ENCODE measurements at regions of chr4 and their contacts with region 1.

Region 1: DNA sequence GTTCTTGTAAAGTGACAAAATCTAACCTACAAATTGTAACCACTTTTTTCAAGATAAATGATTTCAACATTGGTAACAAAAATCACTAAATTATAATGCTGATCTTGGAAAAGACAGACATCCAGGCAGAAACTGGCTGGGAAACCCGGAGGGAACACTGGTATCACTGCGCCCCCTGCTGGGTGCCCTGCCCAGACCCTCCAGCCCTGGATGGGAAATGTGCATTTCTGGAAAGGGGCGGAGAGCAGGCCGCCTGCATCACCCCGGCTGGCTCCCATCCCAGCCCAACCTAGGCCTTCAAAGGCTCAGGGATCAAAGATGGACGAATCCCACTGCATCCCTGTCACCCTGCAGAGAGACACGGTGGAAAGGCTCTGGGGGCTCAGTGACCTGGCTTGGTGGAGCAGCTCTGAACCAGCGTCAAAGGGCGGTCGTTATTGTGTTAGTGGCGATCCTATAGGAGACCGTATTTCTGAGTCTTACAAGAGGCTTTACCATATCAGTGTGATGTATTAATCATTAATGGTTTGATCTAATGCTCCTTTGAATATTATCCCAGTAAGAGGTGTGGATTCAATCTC is 37.3 kb downstream of the ACOX3 start:
- DNase-seq: peak; percentile 91 to 96 (median 96)
- ATAC-seq: peak; percentile 79 to 86
- H3K4me3 ChIP-seq: no peak overlapping the region
- H3K27ac ChIP-seq: no peak overlapping the region
- H3K4me1 ChIP-seq: peaks cover 4% of the 10 kb centered on the region
- H3K27me3 ChIP-seq: no peaks in the 10 kb centered on the region

Region 2: DNA sequence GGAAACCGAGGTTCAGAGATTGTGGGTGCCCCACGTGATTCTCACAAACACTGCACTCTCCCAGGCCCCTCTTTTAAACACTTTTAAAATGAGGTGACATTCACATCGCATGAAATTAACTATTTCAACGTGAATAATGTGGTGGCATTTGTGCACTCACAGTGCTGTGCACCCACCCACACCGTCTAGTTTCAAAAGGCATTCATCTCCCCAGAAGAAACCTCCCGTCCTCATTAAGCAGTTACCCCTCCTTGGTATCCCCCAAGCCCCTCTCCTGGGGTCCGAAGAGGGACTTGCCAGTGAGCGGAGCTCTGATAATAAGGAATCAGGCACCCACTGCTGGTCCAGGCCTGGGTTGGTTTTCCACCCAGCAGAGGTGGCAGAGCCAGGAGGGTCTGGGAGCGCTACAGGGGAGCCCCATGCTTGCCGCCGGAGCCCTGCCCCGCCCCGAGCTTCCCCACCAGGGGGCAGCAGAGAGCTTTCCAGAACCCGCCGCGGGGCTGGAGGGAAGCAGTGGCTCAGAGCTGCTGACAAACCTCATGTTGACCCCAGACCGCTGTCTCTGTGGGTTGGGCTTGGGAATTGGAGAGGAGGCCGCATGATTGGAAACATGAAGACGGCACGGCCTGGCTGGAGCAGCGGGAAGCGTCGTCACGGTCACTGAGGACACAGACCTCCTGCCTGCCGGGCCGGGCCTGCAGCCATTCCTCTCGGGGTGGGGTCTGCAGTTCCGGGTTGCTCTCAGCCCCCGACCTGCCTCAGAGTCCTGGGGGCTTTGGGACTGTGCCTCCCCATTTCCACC is 161.2 kb before region 1 on chr4:
- intact Hi-C with region 1: loop called (anchors 1 to 5 kb)
- DNase-seq: peak; percentile 92 to 97 (median 96)
- ATAC-seq: peak; percentile 79 to 85
- H3K4me3 ChIP-seq: no peak overlapping the region
- H3K27ac ChIP-seq: peak overlapping the region; percentile 76
- H3K4me1 ChIP-seq: peaks cover 6% of the 10 kb centered on the region
- H3K27me3 ChIP-seq: no peaks in the 10 kb centered on the region

Region 3: GRCh38 chr4:8255698-8256441 is 147.4 kb before region 1 on chr4:
- intact Hi-C with region 1: loop called in 1 of 4 experiments (anchors 5 kb)
- DNase-seq: peak; percentile 84 to 90 (median 85)
- ATAC-seq: peak; percentile 71 to 83
- H3K4me3 ChIP-seq: no peak overlapping the region
- H3K27ac ChIP-seq: no peak overlapping the region
- H3K4me1 ChIP-seq: no peaks in the 10 kb centered on the region
- H3K27me3 ChIP-seq: no peaks in the 10 kb centered on the region

Region 4: DNA sequence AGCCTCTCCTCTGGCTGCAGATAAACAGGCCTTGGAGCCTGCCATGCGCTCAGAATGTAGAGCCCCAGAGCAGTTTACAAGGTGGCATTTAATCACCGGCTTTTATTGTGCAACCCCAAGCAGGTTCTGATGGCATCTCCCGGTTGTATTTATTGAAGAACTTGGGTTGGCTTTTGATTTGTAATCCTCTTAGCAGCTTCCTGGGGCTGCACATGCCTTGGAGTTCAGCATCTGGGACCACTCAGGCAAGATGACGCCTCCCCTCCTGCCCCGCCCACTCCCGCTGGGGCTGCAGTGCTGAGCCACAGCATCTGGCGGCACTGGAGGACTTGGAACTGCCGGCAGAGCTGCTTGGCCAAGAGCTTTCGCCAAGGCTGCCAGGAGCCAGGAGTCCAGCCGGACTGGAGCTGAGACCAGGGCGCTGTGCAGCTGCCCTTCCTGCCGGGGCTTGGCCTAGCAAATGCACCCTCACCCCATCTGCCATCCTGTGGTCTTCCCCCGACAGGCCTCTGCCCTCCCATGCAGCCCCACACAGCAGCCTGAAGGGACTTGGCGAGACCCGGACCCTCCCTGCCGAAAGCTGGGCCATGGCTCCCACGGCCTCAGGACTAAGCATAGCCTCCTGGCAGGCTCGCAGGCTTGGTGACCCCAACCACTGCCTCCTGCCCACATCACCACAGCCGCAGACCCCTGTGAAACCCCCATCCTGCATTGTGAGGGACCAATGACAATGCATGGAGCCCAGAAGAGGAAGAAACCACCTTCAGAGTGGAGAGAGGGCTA is 128.3 kb before region 1 on chr4:
- intact Hi-C with region 1: loop called in 2 of 4 experiments (anchors 5 to 10 kb)
- DNase-seq: peak; percentile 93 to 97 (median 95)
- ATAC-seq: peak; percentile 63 to 76
- H3K4me3 ChIP-seq: no peak overlapping the region
- H3K27ac ChIP-seq: no peak overlapping the region
- H3K4me1 ChIP-seq: peaks cover 16% of the 10 kb centered on the region
- H3K27me3 ChIP-seq: no peaks in the 10 kb centered on the region

Region 5: GRCh38 chr4:8607603-8608481 is 204.6 kb after region 1 on chr4:
- intact Hi-C with region 1: no loop called
- DNase-seq: peak in 2 of 3 donors; percentile 74 to 75
- ATAC-seq: no peak
- H3K4me3 ChIP-seq: no peak overlapping the region
- H3K27ac ChIP-seq: no peak overlapping the region
- H3K4me1 ChIP-seq: no peaks in the 10 kb centered on the region
- H3K27me3 ChIP-seq: no peaks in the 10 kb centered on the region